Activated CD4-positive, alpha-beta T cell treated with anti-CD3 and anti-CD28 coated beads for 36 hours (primary cell): ENCODE measurements at regions of chr16 and their contacts with region 1.

Region 1: GRCh38 chr16:48623304-48624016 is 13.5 kb upstream of the N4BP1 start:
- DNase-seq: peak; percentile 90
- ATAC-seq: peak; percentile 97
- H3K4me3 Mint-ChIP-seq: peak overlapping the region; percentile 68
- H3K27ac Mint-ChIP-seq: peak overlapping the region; percentile 77
- H3K4me1 Mint-ChIP-seq: peaks cover 19% of the 10 kb centered on the region
- H3K27me3 Mint-ChIP-seq: no peaks in the 10 kb centered on the region

Region 2: GRCh38 chr16:48353565-48354163 is 269.8 kb before region 1 on chr16:
- CTCF ChIA-PET with region 1: interaction called, 72 read pairs
- POLR2A ChIA-PET with region 1: interaction called, 5 read pairs
- intact Hi-C with region 1: loop called (anchors 1 kb)
- DNase-seq: peak; percentile 78
- ATAC-seq: peak; percentile 83
- H3K4me3 Mint-ChIP-seq: no peak overlapping the region
- H3K27ac Mint-ChIP-seq: peak overlapping the region; percentile 51
- H3K4me1 Mint-ChIP-seq: peaks cover 25% of the 10 kb centered on the region
- H3K27me3 Mint-ChIP-seq: no peaks in the 10 kb centered on the region

Region 3: GRCh38 chr16:48385272-48386150 is 237.9 kb before region 1 on chr16 and contains the start of gene SIAH1:
- CTCF ChIA-PET with region 1: interaction called, 9 read pairs
- POLR2A ChIA-PET with region 1: no interaction called
- intact Hi-C with region 1: loop called (anchors 1 to 2 kb)
- DNase-seq: peak; percentile 91
- ATAC-seq: peak; percentile 82
- H3K4me3 Mint-ChIP-seq: peak within 1 kb of the TSS; percentile 85
- H3K27ac Mint-ChIP-seq: peak within 1 kb of the TSS; percentile 90
- H3K4me1 Mint-ChIP-seq: peaks cover 21% of the 10 kb centered on the region
- H3K27me3 Mint-ChIP-seq: no peaks in the 10 kb centered on the region
- total RNA-seq, gene SIAH1: 13.1 to 13.3 TPM

Region 4: DNA sequence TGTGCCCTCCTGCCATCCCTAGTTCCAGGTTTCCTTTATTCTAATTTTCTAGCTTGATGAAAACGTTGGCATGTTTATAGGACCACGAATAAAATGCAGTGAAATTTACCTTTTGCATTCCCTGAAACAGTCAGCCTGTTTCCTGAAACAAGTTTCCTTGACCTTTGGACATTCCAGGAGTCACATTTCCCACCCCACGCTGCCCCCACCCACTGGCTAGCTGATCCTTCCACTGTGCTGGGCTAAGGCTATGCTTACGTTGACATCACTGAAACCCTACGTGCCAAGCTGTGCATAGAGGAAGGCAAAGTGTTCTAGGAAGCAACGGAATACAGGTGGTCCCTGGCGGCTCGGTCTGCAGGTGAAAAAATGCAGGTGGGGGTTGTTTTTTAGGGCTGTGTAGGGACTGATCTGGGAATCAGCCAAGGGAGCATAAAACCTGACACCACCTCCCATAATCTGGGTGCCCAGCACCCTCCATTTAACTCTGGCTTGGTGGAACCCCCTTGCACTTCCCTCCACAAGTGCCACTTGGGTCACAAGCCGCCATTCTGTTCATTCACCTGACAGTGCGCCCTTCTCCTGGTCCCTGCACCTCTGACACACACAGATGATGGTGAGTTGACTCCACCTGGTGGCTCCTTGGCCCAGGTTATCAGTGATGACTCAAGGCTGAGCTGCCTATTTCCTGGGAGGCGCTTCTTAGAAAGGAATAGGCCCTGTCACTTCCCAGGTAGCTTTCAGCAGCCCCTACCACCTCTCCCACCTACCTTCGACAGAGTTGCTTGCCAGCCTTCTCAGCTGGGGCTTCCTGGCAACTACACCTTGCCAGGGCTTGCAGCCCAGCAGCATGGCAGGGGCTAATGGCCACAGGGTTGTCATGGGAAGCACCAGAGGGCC is 97.2 kb before region 1 on chr16:
- CTCF ChIA-PET with region 1: interaction called, 8 read pairs
- POLR2A ChIA-PET with region 1: no interaction called
- intact Hi-C with region 1: loop called in 1 of 2 experiments (anchors 1 kb)
- DNase-seq: peak; percentile 71
- ATAC-seq: peak; percentile 90
- H3K4me3 Mint-ChIP-seq: no peak overlapping the region
- H3K27ac Mint-ChIP-seq: no peak overlapping the region
- H3K4me1 Mint-ChIP-seq: no peaks in the 10 kb centered on the region
- H3K27me3 Mint-ChIP-seq: no peaks in the 10 kb centered on the region

Region 5: DNA sequence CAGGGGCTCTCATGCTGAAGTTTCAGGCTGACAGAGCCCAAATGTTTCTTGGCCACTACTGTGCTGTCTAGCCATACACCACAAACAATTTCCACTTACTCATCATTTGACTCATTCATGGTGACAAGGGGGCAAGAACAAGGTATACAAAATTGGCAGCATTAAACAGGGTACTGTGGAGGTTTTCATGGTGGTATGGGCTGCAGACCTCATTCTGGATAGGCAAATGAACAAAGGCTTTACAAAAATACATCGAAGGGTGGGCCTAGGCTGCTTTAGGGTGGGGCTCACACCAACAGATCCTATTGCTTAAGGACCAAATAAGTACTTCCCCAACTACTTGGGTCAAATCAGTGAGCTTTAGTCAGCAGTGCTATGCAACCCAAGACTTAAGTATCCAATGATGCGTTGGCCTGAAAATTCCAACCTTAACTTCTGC is 66.5 kb before region 1 on chr16:
- CTCF ChIA-PET with region 1: interaction called, 23 read pairs
- POLR2A ChIA-PET with region 1: no interaction called
- intact Hi-C with region 1: loop called in 1 of 2 experiments (anchors 1 kb)
- DNase-seq: peak; percentile 52
- ATAC-seq: peak; percentile 89
- H3K4me3 Mint-ChIP-seq: no peak overlapping the region
- H3K27ac Mint-ChIP-seq: peak overlapping the region; percentile 64
- H3K4me1 Mint-ChIP-seq: peaks cover 83% of the 10 kb centered on the region
- H3K27me3 Mint-ChIP-seq: no peaks in the 10 kb centered on the region